PC-9 (cell line): ENCODE measurements at regions of chr19 and their contacts with region 1.

Region 1: GRCh38 chr19:33052352-33052972 is 12.2 kb downstream of the RHPN2 start:
- DNase-seq: peak; percentile 53 to 95
- H3K4me3 ChIP-seq: no peak overlapping the region; the same call in 1 of the 2 replicates
- H3K27ac ChIP-seq: peak overlapping the region; percentile 98
- H3K4me1 ChIP-seq: peaks cover 95% of the 10 kb centered on the region
- H3K27me3 ChIP-seq: no peaks in the 10 kb centered on the region
- CTCF ChIP-seq: no peak

Region 2: GRCh38 chr19:33040994-33041827 is 11.3 kb before region 1 on chr19:
- CTCF ChIA-PET with region 1: interaction called, 5 read pairs
- POLR2A ChIA-PET with region 1: interaction called, 20 read pairs
- intact Hi-C with region 1: loop called (anchors 1 kb)
- DNase-seq: peak; percentile 86 to 97
- H3K4me3 ChIP-seq: peak overlapping the region; percentile 36; the same call in 1 of the 2 replicates
- H3K27ac ChIP-seq: peak overlapping the region; percentile 98
- H3K4me1 ChIP-seq: peaks cover 62% of the 10 kb centered on the region
- H3K27me3 ChIP-seq: no peaks in the 10 kb centered on the region
- CTCF ChIP-seq: no peak

Region 3: GRCh38 chr19:33080761-33081681 is 28.6 kb after region 1 on chr19 and contains the start of gene GPATCH1:
- CTCF ChIA-PET with region 1: interaction called, 8 read pairs
- POLR2A ChIA-PET with region 1: interaction called, 5 read pairs
- intact Hi-C with region 1: loop called (anchors 1 kb)
- DNase-seq: peak; percentile 69 to 86
- H3K4me3 ChIP-seq: peak within 1 kb of the TSS; percentile 86
- H3K27ac ChIP-seq: no peak within 1 kb of the TSS
- H3K4me1 ChIP-seq: peaks cover 30% of the 10 kb centered on the region
- H3K27me3 ChIP-seq: no peaks in the 10 kb centered on the region
- CTCF ChIP-seq: no peak
- total RNA-seq, gene GPATCH1: 11.0 and 12.4 TPM in 2 replicates

Region 4: GRCh38 chr19:33110137-33110910 is 57.9 kb after region 1 on chr19:
- CTCF ChIA-PET with region 1: no interaction called
- POLR2A ChIA-PET with region 1: no interaction called
- intact Hi-C with region 1: loop called (anchors 1 kb)
- DNase-seq: peak; percentile 31 to 74
- H3K4me3 ChIP-seq: no peak overlapping the region
- H3K27ac ChIP-seq: 0 out of 2 replicates have a peak overlapping the region, but pooled peaks have one; percentile 4
- H3K4me1 ChIP-seq: 0 out of 2 replicates have a peak, but pooled peaks cover 11% of the 10 kb centered on the region
- H3K27me3 ChIP-seq: no peaks in the 10 kb centered on the region
- CTCF ChIP-seq: no peak